Heart left ventricle (tissue), 16 donors: ENCODE measurements at regions of chr9 and their contacts with region 1.

Region 1: DNA sequence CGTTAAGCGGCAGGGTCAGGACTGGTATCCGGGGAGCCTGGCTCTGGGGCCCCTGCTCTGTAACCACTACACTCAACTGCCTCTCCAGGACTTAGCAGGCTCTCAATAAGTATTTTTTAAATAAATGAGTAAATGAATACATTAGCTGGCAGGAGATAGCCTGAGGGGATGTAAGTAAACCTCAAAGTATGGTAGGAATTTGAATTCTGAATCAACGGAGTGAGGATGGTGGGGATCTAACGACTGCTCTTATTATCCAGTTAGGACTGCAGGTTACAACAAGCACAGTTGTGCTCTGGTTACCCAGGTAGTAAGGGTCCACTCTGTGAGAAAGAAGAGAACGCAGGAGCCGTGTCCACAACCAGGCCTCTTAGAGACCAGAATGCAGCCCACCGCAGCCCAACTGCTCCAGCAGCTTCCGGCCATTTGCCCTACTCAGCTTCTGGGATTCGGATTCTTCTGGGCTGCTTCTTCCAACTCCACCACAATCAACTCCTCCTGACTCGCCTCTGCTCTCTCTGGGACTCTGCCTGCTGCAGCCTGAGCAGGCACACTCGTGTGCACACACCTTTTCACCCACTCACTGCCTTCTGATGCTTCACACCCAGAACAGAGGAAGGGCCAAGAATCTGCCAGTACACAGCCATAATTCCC is 52.6 kb downstream of the MED27 start:
- DNase-seq: no peak
- ATAC-seq: no peak
- H3K4me3 ChIP-seq: no peak overlapping the region
- H3K27ac ChIP-seq: no peak overlapping the region
- H3K4me1 ChIP-seq: peaks cover 0 to 12% (median under 1%) of the 10 kb centered on the region in 12 donors
- H3K27me3 ChIP-seq: no peaks in the 10 kb centered on the region
- CTCF ChIP-seq: no peak
- POLR2A ChIP-seq: no peak

Region 2: GRCh38 chr9:132079391-132080091 is 52.5 kb after region 1 on chr9 and contains the start of gene MED27:
- intact Hi-C with region 1: loop called in 1 of 10 experiments (anchors 10 kb)
- DNase-seq: peak; percentile 91 to 95 (median 93)
- ATAC-seq: peak; percentile 92 to 99 (median 98)
- H3K4me3 ChIP-seq: peak within 1 kb of the TSS; percentile 40 to 96 (median 76)
- H3K27ac ChIP-seq: peak within 1 kb of the TSS; percentile 1 to 80 (median 68)
- H3K4me1 ChIP-seq: peaks cover 0 to 30% (median 17%) of the 10 kb centered on the region in 12 donors
- H3K27me3 ChIP-seq: no peaks in the 10 kb centered on the region
- CTCF ChIP-seq: no peak
- POLR2A ChIP-seq: no peak
- total RNA-seq, gene MED27: 14.3 to 20.5 (median 15.6) TPM